K562 (cell line): ENCODE measurements at regions of chr10 and their contacts with region 1.

Region 1: GRCh38 chr10:11684717-11685645 is 57.2 kb upstream of the ECHDC3 start:
- DNase-seq: peak; percentile 72 to 90 (median 78)
- ATAC-seq: peak; percentile 85
- H3K4me3 ChIP-seq: 0 out of 2 replicates have a peak overlapping the region, but pooled peaks have one; percentile 5
- H3K27ac ChIP-seq: peak overlapping the region; percentile 72
- H3K4me1 ChIP-seq: peaks cover 38 to 42% of the 10 kb centered on the region in 2 experiments
- H3K27me3 ChIP-seq: peaks cover 0 to 9% of the 10 kb centered on the region in 2 experiments; a peak in 1 of 5 replicates
- CTCF ChIP-seq: no peak
- EP300 ChIP-seq: peak; percentile 73; the same call in 1 of the 2 replicates
- POLR2A ChIP-seq: no peak; the same call in 1 of the 2 replicates
- RAD21 ChIP-seq: 0 out of 4 replicates have a peak, but pooled peaks of 1 of the 2 experiments have one; percentile 4

Region 2: DNA sequence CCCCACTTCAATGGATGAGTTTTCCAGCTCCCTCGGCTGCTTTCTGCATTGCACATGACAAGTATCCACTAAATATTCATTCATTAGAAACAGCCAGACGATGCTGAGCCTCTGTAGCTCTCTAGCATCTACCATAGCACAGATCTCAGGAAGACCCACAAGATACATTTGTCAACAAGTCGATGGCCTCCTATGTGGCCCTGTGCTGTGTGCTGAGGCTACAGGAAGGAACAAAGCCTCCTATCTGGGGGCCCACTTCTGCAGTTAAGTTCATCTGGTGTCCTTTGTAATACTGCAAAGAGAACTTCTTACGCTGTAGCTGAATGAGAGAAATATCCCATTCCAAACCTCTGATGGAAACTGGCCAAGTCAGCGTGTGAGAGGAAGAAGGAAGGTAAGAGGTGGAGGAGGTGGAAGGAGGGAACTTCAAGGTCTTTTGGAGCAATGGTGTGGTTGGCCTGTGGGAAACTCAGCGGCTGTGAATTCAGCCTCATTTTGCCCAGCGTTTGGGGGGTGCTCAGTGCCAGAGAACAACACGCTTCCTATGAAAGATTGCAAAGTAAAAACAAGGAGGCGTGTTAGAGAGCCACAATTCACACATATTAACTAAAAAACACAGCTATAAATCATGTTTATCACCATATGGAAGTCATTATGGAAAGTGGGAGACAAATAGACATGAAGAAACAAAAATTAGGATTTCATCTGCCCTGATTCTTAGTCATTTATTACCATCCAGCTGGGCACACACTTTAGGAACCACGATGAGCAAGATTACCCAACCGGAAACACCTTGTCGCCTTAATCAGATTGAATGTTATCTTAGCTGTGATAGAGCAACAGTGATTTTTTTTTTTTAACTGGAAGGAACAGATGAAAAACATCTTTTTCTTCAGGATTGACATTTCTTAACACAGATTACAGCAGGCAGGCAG is 11.4 kb before region 1 on chr10:
- CTCF ChIA-PET with region 1: no interaction called
- POLR2A ChIA-PET with region 1: interaction called, 10 read pairs
- in situ Hi-C with region 1: no loop called
- intact Hi-C with region 1: no loop called
- DNase-seq: no peak
- ATAC-seq: peak; percentile 49
- H3K4me3 ChIP-seq: no peak overlapping the region
- H3K27ac ChIP-seq: no peak overlapping the region
- H3K4me1 ChIP-seq: peaks cover 0 to 7% of the 10 kb centered on the region in 2 experiments; a peak in 3 of 5 replicates
- H3K27me3 ChIP-seq: no peaks in the 10 kb centered on the region
- CTCF ChIP-seq: no peak
- EP300 ChIP-seq: no peak
- POLR2A ChIP-seq: no peak
- RAD21 ChIP-seq: no peak